Right cardiac atrium (tissue), 5 donors: ENCODE measurements at regions of chr11 and their contacts with region 1.

Region 1: GRCh38 chr11:3222941-3223915 is 4.6 kb upstream of the MRGPRG start:
- DNase-seq: no peak
- ATAC-seq: no peak
- H3K4me3 ChIP-seq: no peak overlapping the region
- H3K27ac ChIP-seq: no peak overlapping the region
- H3K4me1 ChIP-seq: no peaks in the 10 kb centered on the region
- H3K27me3 ChIP-seq: no peaks in the 10 kb centered on the region

Region 2: GRCh38 chr11:3057069-3057963 is 165.9 kb before region 1 on chr11 and contains the start of gene CARS1:
- intact Hi-C with region 1: no loop called
- DNase-seq: peak; percentile 98 to 99 (median 98)
- ATAC-seq: peak; percentile 98
- H3K4me3 ChIP-seq: peak within 1 kb of the TSS; percentile 83
- H3K27ac ChIP-seq: peak within 1 kb of the TSS; percentile 80
- H3K4me1 ChIP-seq: peaks cover 3% of the 10 kb centered on the region
- H3K27me3 ChIP-seq: no peaks in the 10 kb centered on the region
- total RNA-seq, gene CARS1: 14.4 to 18.8 (median 16.5) TPM

Region 3: DNA sequence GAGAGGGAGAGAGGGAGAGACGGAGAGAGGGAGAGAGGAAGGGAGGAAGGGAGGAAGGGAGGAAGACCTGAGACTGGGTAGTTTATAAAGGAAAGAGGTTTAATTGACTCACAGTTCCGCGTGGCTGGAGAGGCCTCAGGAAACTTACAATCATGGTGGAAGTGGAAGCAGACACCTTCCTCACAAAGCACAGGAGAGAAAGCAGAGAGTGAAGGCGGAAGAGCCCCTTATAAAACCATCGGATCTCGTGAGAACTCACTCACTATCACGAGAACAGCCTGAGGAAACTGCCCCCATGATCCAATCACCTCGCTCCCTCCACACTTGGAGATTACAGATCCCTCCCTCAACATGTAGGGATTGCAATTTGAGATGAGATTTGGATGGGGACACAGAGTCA is 153.8 kb before region 1 on chr11:
- intact Hi-C with region 1: no loop called
- DNase-seq: no peak
- ATAC-seq: no peak
- H3K4me3 ChIP-seq: no peak overlapping the region
- H3K27ac ChIP-seq: no peak overlapping the region
- H3K4me1 ChIP-seq: no peaks in the 10 kb centered on the region
- H3K27me3 ChIP-seq: no peaks in the 10 kb centered on the region

Region 4: GRCh38 chr11:3109921-3110706 is 113.1 kb before region 1 on chr11:
- intact Hi-C with region 1: loop called in 2 of 4 experiments (anchors 5 to 10 kb)
- DNase-seq: peak; percentile 34 to 74 (median 62)
- ATAC-seq: peak; percentile 63
- H3K4me3 ChIP-seq: no peak overlapping the region
- H3K27ac ChIP-seq: no peak overlapping the region
- H3K4me1 ChIP-seq: no peaks in the 10 kb centered on the region
- H3K27me3 ChIP-seq: no peaks in the 10 kb centered on the region

Region 5: GRCh38 chr11:3135481-3136440 is 87.5 kb before region 1 on chr11:
- intact Hi-C with region 1: no loop called
- DNase-seq: peak; percentile 17 to 52 (median 52)
- ATAC-seq: peak in 1 of 2 donors; percentile 2
- H3K4me3 ChIP-seq: no peak overlapping the region
- H3K27ac ChIP-seq: no peak overlapping the region
- H3K4me1 ChIP-seq: peaks cover 3% of the 10 kb centered on the region
- H3K27me3 ChIP-seq: no peaks in the 10 kb centered on the region